Activated CD8-positive, alpha-beta T cell treated with anti-CD3 and anti-CD28 coated beads, Interleukin-2, amount 10 ng/mL, durations not matched to agents 7 days and 5 days (primary cell): ENCODE measurements at regions of chr9 and their contacts with region 1.

Region 1: GRCh38 chr9:127943731-127944144 is 6.1 kb upstream of the DPM2 start:
- DNase-seq: peak; percentile 84
- ATAC-seq: peak; percentile 88
- H3K4me3 Mint-ChIP-seq: peak overlapping the region; percentile 22
- H3K27ac Mint-ChIP-seq: peak overlapping the region; percentile 66
- H3K4me1 Mint-ChIP-seq: peaks cover 44% of the 10 kb centered on the region
- H3K27me3 Mint-ChIP-seq: no peaks in the 10 kb centered on the region

Region 2: DNA sequence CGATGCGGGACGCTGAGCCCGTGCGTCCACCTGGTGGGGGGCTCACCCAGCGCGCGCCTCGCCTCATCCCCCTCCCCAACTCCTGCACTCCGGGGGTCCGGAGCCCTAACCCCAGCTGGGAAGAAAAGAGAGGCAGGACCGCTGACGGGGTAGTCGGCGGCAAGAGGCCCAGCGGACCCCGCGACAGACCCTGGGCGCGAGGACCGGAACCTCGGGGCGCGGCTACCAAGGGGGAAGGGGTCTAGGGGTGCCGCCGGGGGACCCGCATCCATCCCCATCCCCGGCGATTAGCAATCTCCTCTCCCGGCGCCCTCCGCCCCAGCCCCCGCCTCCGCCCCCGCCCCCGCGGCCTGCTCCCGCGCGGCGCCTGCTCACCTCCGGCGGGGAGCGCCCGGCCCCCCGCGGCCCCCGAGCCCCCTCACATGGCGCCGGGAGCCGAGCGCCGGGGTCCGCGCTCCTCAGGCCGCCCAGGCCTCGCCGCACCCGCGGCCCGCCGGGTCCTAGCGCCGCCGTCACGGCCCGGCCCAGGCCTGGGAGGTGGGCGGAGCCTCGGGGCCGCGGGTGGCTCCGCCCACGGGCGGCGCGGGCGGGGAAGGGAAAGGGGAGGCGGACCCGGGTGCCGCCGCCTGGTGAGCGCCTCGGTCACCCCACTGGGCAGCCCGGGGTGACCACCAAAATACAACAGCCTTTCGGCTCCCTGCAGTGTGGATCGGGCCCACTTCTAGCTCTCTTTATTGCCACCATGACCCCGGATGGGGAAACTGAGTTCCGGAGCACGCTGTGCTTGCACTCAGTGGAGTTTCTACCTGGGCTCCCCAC is 44.4 kb before region 1 on chr9 and contains the start of gene ST6GALNAC6:
- CTCF ChIA-PET with region 1: no interaction called
- POLR2A ChIA-PET with region 1: no interaction called
- DNase-seq: peak; percentile 73
- ATAC-seq: peak; percentile 77
- H3K4me3 Mint-ChIP-seq: peak within 1 kb of the TSS; percentile 83
- H3K27ac Mint-ChIP-seq: peak within 1 kb of the TSS; percentile 86
- H3K4me1 Mint-ChIP-seq: peaks cover 39% of the 10 kb centered on the region
- H3K27me3 Mint-ChIP-seq: no peaks in the 10 kb centered on the region
- total RNA-seq, gene ST6GALNAC6: 68.6 to 77.6 TPM

Region 3: DNA sequence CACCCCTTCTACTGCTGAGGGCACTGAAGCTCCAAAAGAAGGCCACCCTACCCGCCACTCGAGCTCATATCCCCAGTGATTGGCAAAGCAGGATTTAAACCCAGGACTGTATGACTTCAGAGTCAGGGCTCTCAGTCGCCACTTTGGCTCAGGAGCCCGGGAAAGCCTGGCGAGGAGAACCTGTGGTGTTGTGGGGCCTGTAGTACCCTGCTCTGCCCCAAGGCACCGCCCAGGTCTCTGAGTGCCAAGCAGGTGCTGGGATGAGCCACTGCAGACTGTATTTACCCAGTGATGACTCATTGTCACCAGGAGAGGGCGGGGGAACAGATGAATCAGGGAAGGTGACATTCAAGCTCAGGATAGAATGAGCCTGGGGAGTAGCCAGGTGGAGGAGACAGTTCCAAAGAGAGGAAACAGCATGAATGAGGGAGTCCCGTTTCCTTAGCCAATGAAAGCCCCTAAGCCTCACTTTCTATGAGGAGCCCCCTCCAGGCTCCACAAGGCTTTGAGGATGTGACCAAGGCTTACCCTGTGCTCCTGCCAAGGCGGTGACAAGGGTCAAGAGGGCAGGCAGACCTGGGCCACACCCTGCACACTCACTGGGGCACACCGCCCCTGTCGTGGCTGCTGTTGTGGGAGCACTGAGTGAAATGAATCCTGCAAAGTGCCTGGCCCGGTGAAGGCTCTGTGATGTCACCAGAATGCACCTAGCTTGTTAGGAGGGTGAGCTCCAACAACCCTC is 11.7 kb after region 1 on chr9:
- CTCF ChIA-PET with region 1: interaction called, 144 read pairs
- POLR2A ChIA-PET with region 1: interaction called, 4 read pairs
- DNase-seq: peak; percentile 83
- ATAC-seq: peak; percentile 96
- H3K4me3 Mint-ChIP-seq: peak overlapping the region; percentile 21
- H3K27ac Mint-ChIP-seq: peak overlapping the region; percentile 70
- H3K4me1 Mint-ChIP-seq: peaks cover 89% of the 10 kb centered on the region
- H3K27me3 Mint-ChIP-seq: no peaks in the 10 kb centered on the region

Region 4: GRCh38 chr9:127970401-127971313 is 26.9 kb after region 1 on chr9:
- CTCF ChIA-PET with region 1: interaction called, 51 read pairs
- POLR2A ChIA-PET with region 1: interaction called, 6 read pairs
- DNase-seq: peak; percentile 86
- ATAC-seq: peak; percentile 74
- H3K4me3 Mint-ChIP-seq: peak overlapping the region; percentile 97
- H3K27ac Mint-ChIP-seq: peak overlapping the region; percentile 99
- H3K4me1 Mint-ChIP-seq: peaks cover 98% of the 10 kb centered on the region
- H3K27me3 Mint-ChIP-seq: no peaks in the 10 kb centered on the region

Region 5: GRCh38 chr9:127980706-127981558 is 37.2 kb after region 1 on chr9 and contains the start of gene EEIG1:
- CTCF ChIA-PET with region 1: interaction called, 51 read pairs
- POLR2A ChIA-PET with region 1: no interaction called
- DNase-seq: peak; percentile 97
- ATAC-seq: peak; percentile 93
- H3K4me3 Mint-ChIP-seq: peak within 1 kb of the TSS; percentile 97
- H3K27ac Mint-ChIP-seq: peak within 1 kb of the TSS; percentile 92
- H3K4me1 Mint-ChIP-seq: peaks cover 45% of the 10 kb centered on the region
- H3K27me3 Mint-ChIP-seq: no peaks in the 10 kb centered on the region
- total RNA-seq, gene EEIG1: 227 to 232 TPM

Region 6: DNA sequence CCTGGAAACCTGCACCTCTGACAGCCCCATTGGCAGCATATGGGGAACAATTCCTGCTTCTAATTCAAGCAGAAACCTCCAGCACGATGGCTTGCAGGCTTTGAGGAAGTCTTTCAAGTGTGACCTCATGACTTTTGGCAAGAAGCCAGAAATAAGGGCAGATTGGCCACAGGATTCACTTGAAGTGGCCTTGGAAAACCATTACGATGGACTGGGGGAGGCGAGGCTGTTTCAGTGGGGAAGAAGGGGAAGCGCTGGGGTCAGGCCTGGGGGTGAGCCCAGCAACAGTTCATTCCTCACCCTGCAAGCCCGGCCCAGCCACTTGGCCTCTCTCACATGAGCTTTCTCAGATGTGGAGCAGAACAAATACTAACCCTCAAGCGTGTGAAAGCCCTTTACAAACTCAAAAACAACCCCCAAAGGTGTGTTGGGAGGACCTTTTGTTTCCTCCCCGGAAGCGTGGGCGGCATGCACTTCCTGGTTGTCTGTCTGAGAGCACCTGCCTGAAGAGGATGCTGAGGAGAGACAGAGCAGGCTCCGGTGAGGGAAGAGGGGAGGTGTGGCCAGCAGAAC is 63.9 kb after region 1 on chr9:
- CTCF ChIA-PET with region 1: interaction called, 13 read pairs
- POLR2A ChIA-PET with region 1: no interaction called
- DNase-seq: peak; percentile 90
- ATAC-seq: peak; percentile 89
- H3K4me3 Mint-ChIP-seq: peak overlapping the region; percentile 61
- H3K27ac Mint-ChIP-seq: peak overlapping the region; percentile 90
- H3K4me1 Mint-ChIP-seq: peaks cover 53% of the 10 kb centered on the region
- H3K27me3 Mint-ChIP-seq: no peaks in the 10 kb centered on the region

Region 7: GRCh38 chr9:128026773-128027541 is 83.2 kb after region 1 on chr9:
- CTCF ChIA-PET with region 1: interaction called, 12 read pairs
- POLR2A ChIA-PET with region 1: interaction called, 3 read pairs
- DNase-seq: peak; percentile 59
- ATAC-seq: peak; percentile 24
- H3K4me3 Mint-ChIP-seq: peak overlapping the region; percentile 71
- H3K27ac Mint-ChIP-seq: peak overlapping the region; percentile 96
- H3K4me1 Mint-ChIP-seq: peaks cover 93% of the 10 kb centered on the region
- H3K27me3 Mint-ChIP-seq: no peaks in the 10 kb centered on the region

Region 8: GRCh38 chr9:128067876-128068613 is 124.3 kb after region 1 on chr9 and contains the start of gene SLC25A25:
- CTCF ChIA-PET with region 1: interaction called, 11 read pairs
- POLR2A ChIA-PET with region 1: interaction called, 3 read pairs
- DNase-seq: peak; percentile 100
- ATAC-seq: peak; percentile 82
- H3K4me3 Mint-ChIP-seq: peak within 1 kb of the TSS; percentile 99
- H3K27ac Mint-ChIP-seq: peak within 1 kb of the TSS; percentile 90
- H3K4me1 Mint-ChIP-seq: peaks cover 50% of the 10 kb centered on the region
- H3K27me3 Mint-ChIP-seq: no peaks in the 10 kb centered on the region
- total RNA-seq, gene SLC25A25: 17.2 to 19.2 TPM